HepG2 (cell line): ENCODE measurements at regions of chr22 and their contacts with region 1.

Region 1: DNA sequence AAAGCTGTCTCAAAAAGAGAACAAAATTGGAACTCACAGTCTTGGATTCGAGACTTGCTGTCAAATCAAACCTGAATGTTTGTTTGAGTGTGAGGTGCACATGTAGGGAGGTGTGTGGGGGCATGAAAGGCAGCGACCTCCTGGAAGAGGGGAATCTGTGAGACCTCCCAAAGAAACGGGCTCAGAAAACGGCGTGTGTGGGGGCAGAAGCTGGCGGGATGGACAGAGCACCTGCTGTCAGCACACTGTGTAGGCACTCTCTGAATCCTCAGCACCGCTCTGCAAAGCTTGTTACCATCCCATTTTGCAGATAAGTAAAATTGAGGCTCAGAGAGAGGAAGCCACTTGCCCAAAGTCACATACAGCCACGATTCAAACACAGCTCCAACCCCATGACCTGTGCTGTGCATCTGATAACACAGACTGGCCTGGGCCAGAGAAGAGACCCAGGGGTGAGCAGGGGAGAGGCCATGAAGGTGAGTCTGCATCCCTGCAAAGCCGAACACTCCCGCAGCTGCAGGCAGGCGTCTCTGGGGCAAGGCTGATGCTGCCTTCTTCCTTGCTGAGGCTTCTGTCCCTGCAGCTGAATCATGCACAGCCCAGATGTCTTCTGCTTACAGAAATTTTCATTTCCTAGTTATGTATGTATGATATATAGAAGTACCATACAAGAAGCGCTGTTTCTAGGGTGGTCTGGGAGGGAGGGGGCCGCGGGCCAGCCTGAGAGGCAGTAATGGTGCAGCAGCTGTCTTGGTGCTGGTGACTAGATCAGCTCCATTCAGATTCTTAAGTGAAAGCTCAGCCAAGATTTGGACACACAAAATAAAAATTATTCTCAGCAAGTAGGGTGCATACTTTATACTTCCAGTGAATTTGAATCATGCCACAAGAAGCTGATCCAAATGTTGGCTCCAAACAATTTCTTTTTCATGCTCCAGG is 67.3 kb upstream of the SHISAL1 start:
- DNase-seq: no peak
- ATAC-seq: no peak
- H3K4me3 ChIP-seq: no peak overlapping the region
- H3K27ac ChIP-seq: no peak overlapping the region
- H3K4me1 ChIP-seq: peaks cover 13% of the 10 kb centered on the region
- H3K27me3 ChIP-seq: peaks cover 3 to 31% of the 10 kb centered on the region in 2 experiments
- CTCF ChIP-seq: no peak
- EP300 ChIP-seq: no peak
- POLR2A ChIP-seq: no peak
- RAD21 ChIP-seq: no peak

Region 2: GRCh38 chr22:44424867-44425700 is 45.0 kb after region 1 on chr22:
- CTCF ChIA-PET with region 1: no interaction called
- POLR2A ChIA-PET with region 1: no interaction called
- in situ Hi-C with region 1: no loop called
- intact Hi-C with region 1: no loop called
- DNase-seq: no peak
- ATAC-seq: 0 out of 3 replicates have a peak, but pooled peaks have one; percentile 29
- H3K4me3 ChIP-seq: no peak overlapping the region
- H3K27ac ChIP-seq: no peak overlapping the region
- H3K4me1 ChIP-seq: no peaks in the 10 kb centered on the region
- H3K27me3 ChIP-seq: peaks cover 5 to 38% of the 10 kb centered on the region in 2 experiments; a peak in 4 of 5 replicates
- CTCF ChIP-seq: no peak
- EP300 ChIP-seq: no peak
- POLR2A ChIP-seq: no peak
- RAD21 ChIP-seq: no peak

Region 3: DNA sequence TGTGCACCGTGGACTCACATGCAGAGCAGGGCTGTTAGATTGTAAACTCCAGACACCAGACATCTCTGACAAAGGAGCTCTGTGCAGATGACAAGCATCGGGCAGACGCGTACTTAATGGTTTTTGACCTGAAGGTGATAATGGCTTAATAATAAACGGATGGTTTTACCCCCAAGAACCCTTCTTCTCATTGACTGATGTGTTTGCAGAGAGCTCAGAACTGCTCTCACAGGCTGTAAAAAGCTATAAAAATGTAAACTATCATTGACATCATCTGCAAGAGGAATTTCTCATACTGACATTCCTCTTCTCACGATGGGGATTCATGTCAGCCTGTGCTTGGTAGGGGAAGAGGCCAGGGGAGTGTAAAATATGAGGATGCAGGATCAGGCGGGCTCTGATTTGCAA is 363.7 kb after region 1 on chr22:
- CTCF ChIA-PET with region 1: no interaction called
- POLR2A ChIA-PET with region 1: no interaction called
- in situ Hi-C with region 1: no loop called
- intact Hi-C with region 1: loop called (anchors 5 kb)
- DNase-seq: no peak
- ATAC-seq: no peak
- H3K4me3 ChIP-seq: no peak overlapping the region
- H3K27ac ChIP-seq: no peak overlapping the region
- H3K4me1 ChIP-seq: peaks cover 33% of the 10 kb centered on the region
- H3K27me3 ChIP-seq: peaks cover 0 to 6% of the 10 kb centered on the region in 2 experiments; a peak in 2 of 5 replicates
- CTCF ChIP-seq: no peak
- EP300 ChIP-seq: no peak
- POLR2A ChIP-seq: no peak
- RAD21 ChIP-seq: no peak